Ovary (tissue), 10 donors: ENCODE measurements at regions of chr7 and their contacts with region 1.

Region 1: DNA sequence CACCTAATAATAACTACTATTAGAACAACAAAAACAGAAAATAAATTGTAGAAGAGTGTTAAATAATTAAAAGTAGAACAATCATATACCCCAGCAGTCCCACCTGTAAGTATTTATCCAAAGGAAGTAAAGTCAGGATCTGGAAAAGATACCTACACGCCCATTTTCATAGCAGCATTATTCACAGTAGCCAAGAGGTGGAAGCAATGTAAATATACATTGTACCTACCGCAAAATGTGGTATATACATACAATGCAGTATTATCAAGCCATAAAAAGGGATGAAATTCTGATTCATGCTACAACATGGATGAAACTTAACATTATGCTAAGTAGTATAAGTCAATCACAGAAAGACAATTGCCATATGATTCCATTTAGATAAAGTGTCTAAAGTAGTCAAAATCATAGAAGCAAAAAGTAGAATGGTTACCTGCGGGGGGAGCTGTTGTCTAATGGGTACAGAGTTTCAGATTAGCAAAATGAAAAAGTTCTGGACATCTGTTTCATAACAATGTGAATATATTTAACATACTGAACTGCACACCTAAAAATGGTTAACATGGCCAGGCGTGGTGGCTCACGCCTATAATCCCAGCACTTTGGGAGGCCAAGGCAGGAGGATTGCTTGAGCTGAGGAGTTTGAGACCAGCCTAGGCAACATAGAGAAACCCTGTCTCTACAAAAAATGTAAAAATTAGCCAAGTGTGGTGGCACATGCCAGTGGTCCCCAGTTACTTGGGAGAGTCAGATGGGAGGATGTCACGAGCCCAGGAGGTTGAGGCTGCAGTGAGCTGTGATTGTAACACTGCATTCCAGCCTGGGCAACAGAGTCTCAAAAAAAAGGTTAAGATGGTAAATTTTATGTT is 6.0 kb upstream of the TMED4 start:
- DNase-seq: peak in 2 of 5 donors; percentile 43 to 58
- H3K4me3 ChIP-seq: no peak overlapping the region
- H3K27ac ChIP-seq: no peak overlapping the region
- H3K4me1 ChIP-seq: no peaks in the 10 kb centered on the region
- H3K27me3 ChIP-seq: no peaks in the 10 kb centered on the region
- CTCF ChIP-seq: peak in 2 of 3 donors; percentile 24 to 49
- EP300 ChIP-seq: no peak
- POLR2A ChIP-seq: no peak

Region 2: DNA sequence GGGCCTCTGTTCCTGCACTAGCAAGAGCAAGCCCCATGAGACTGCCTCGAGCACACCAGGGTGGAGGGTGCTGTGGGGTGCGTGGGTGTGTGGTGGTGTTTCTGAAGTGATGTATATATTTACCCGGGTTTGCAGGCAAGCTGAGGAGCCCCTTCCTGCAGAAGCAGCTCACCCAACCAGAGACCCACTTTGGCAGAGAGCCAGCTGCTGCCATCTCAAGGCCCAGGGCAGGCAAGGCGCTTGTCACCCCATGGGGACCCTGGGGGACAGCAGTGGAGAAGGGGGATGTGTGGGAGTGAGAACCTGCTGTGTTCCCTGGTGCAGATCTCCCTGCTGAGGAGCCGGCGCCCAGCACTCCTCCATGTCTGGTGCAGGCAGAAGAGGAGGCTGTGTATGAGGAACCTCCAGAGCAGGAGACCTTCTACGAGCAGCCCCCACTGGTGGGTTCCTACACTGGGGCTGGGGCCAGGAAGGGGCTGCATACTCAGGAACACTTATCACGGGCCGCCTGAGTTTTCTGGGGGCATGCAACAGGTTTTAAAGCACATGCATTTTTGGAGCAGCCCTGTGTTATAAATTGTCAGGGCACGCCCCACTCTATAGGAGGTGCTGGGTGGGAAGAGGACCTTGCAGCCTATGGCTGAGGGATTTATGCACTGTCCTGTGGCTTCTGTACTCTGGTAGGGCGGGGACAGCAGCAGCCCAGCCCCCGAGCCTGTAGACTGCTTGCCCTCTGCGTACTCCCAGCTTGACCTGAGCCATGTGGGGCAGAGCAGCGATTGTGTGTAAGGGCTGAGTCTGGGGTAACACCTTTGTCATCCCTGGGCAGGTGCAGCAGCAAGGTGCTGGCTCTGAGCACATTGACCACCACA is 528.6 kb before region 1 on chr7:
- intact Hi-C with region 1: no loop called
- DNase-seq: peak in 3 of 5 donors; percentile 8 to 41 (median 36)
- H3K4me3 ChIP-seq: no peak overlapping the region
- H3K27ac ChIP-seq: no peak overlapping the region
- H3K4me1 ChIP-seq: peaks cover 3% of the 10 kb centered on the region
- H3K27me3 ChIP-seq: no peaks in the 10 kb centered on the region
- CTCF ChIP-seq: no peak
- EP300 ChIP-seq: no peak
- POLR2A ChIP-seq: no peak

Region 3: DNA sequence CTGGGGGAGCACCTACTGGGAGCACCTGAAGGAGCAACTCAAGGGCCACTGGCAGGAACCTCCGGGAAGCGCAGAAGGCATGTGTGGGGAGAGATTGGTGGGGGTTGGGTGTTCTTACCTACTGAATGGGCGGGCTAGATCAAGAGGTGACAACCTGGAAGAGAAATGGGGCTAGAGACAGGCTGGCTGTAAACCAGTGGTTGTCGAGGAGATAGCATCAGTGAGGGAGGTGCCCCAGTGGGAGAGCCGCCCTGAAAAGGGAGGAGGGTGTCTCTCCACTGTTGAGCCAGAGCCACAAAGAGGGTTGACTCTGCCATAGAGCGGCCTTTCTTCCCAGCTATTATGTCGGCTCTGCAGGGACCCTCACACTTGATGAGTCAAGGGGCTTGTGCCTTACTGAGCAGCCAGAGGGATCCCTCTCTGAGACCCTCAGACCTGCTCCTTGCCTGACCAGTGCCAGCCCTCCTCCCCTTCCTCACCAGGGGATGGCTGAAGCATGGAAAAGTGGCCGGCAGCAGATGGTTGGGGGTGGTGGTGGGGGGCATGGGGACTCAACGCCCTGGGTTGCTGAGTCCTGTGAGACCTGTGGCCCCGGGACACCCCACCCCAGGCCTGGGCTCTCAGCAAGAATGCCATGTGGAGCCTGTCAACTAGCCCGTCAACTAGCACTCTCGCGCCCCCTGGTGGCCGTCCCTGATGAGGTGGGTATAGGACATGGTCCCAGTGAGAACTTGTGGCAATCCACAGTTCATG is 333.7 kb after region 1 on chr7:
- intact Hi-C with region 1: loop called in 1 of 4 experiments (anchors 5 kb)
- DNase-seq: peak; percentile 28 to 78 (median 69)
- H3K4me3 ChIP-seq: no peak overlapping the region
- H3K27ac ChIP-seq: no peak overlapping the region
- H3K4me1 ChIP-seq: no peaks in the 10 kb centered on the region
- H3K27me3 ChIP-seq: no peaks in the 10 kb centered on the region
- CTCF ChIP-seq: peak in 1 of 3 donors; percentile 30
- EP300 ChIP-seq: no peak
- POLR2A ChIP-seq: no peak

Region 4: DNA sequence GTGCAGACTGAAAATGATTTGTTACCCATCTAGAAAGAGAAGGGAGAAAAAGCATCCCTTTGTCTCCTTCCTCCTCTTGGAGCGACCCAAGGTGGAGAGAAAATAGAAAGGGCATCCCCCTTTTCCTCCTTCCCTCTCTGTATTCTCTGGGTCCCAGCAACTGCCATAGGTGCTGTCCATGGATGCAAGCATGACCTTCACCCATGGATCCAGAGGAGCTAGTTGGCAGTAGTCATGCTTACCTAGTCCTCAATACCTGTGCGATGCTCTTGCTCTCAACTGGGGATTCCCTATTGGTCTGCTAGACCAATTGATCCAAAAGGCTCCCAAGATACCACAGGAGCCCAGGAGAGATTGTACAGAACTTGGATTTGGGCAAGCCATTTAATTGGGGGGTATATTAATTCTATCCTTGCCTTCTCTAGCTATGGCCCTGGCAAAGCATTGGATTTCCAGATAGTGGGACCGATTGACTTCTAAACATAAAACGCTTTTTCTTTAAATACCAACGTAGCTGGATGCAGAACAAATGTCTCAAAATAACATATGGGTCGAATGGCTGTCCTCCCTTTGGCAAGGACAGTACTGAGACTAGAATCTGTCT is 1880.8 kb after region 1 on chr7:
- intact Hi-C with region 1: no loop called
- DNase-seq: no peak
- H3K4me3 ChIP-seq: no peak overlapping the region
- H3K27ac ChIP-seq: no peak overlapping the region
- H3K4me1 ChIP-seq: no peaks in the 10 kb centered on the region
- H3K27me3 ChIP-seq: no peaks in the 10 kb centered on the region
- CTCF ChIP-seq: no peak
- EP300 ChIP-seq: no peak
- POLR2A ChIP-seq: no peak